Right ventricle myocardium inferior (tissue), 1 donor: ENCODE measurements at regions of chr12 and their contacts with region 1.

Region 1: GRCh38 chr12:96578526-96579125 is 89.2 kb downstream of the CFAP54 start:
- DNase-seq: no peak
- ATAC-seq: no peak

Region 2: GRCh38 chr12:96882862-96883261 is 304.2 kb after region 1 on chr12:
- intact Hi-C with region 1: no loop called
- DNase-seq: no peak
- ATAC-seq: no peak

Region 3: GRCh38 chr12:96985480-96986362 is 407.1 kb after region 1 on chr12:
- intact Hi-C with region 1: loop called (anchors 5 kb)
- DNase-seq: peak; percentile 70
- ATAC-seq: no peak

Region 4: DNA sequence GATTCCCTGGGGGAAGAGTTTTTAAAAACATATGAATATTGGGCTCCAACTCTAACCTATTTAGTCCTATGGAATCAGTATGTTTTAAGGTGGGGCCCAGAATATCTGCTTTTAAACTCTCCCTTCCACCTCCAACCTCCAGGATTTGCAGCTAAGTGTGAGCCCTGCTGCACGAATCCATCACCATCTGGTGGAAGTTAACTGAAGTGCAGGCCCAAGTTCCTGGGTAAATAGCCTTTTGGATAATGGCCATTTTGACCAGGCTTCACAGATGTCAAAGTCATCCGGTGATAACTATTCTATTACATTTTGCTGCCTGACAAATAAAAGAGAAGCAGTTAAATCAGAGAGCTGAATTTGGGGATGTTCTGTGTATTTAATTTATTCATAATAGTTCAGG is 825.9 kb after region 1 on chr12:
- intact Hi-C with region 1: loop called (anchors 5 kb)
- DNase-seq: no peak
- ATAC-seq: peak; percentile 28

Region 5: DNA sequence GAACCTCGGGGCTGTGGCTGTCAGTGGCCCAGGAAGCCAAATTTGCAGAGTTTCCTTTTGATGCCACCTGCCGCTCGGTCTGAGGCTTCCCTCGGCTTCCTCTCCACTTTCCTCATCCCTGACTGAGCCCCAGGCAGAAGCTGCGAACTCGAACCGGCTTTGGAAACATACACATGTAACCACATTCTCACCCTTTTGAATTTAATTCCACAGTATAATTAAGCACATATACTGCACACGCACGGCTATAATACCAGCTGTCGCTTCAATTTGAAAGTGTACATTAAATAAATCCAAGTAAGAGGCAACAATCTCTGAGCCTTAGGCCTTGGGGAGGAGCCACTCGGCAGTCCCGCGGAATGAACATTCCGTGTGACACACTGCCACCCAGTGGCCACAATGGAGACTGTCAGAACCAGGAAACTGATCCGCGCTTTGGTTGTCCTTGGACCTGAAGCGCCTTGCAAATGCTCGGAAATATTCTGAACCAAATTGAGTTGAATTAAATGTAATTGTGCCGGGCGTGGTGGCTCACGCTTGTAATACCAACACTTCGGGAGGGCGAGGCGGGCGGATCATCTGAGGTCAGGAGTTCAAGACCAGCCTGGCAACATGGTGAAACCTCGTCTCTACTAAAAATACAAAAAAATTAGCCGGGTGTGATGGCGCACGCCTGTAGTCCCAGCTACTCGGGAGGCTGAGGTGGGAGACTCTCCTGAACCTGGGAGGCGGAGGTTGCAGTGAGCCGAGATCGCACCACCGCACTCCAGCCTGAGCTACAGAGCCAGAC is 1818.9 kb after region 1 on chr12:
- intact Hi-C with region 1: loop called (anchors 2 kb)
- DNase-seq: peak; percentile 86
- ATAC-seq: peak; percentile 97